SK-N-SH (cell line): ENCODE measurements at regions of chrX and their contacts with region 1.

Region 1: GRCh38 chrX:152904151-152905080 is 6.5 kb downstream of the ZNF185 start:
- DNase-seq: peak; percentile 86
- H3K4me3 ChIP-seq: no peak overlapping the region; a peak in 1 of 4 replicates
- H3K27ac ChIP-seq: no peak overlapping the region
- H3K4me1 ChIP-seq: peaks cover 6 to 32% of the 10 kb centered on the region in 2 experiments; a peak in 2 of 4 replicates
- H3K27me3 ChIP-seq: no peaks in the 10 kb centered on the region; the same call in 1 of the 2 replicates
- CTCF ChIP-seq: peak; percentile 85
- EP300 ChIP-seq: no peak
- RAD21 ChIP-seq: peak; percentile 60

Region 2: DNA sequence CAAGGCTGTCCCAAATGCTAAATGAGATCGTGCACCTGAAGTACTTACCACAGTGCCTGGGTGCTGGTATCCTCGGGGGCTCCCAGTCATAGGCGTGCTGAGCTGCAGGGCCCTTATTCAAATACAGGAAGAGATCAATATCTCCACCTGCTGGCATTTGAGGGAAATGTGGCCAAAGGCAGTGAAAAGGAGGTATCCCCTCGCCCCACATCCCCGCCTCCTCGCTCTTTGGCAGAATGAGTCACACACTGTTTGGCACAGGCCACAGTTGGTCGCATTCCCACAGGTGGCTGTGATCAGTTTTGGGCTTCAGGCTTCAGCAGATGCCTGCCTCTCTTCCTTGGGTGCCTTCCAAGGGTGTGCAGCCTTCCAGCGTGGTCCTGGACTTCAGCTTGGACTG is 21.9 kb after region 1 on chrX:
- CTCF ChIA-PET with region 1: interaction called, 24 read pairs
- POLR2A ChIA-PET with region 1: no interaction called
- DNase-seq: peak; percentile 70
- H3K4me3 ChIP-seq: no peak overlapping the region
- H3K27ac ChIP-seq: no peak overlapping the region
- H3K4me1 ChIP-seq: peaks cover 0 to 3% of the 10 kb centered on the region in 2 experiments; a peak in 1 of 4 replicates
- H3K27me3 ChIP-seq: peaks cover 4% of the 10 kb centered on the region; the same call in 1 of the 2 replicates
- CTCF ChIP-seq: peak; percentile 68
- EP300 ChIP-seq: no peak
- RAD21 ChIP-seq: peak; percentile 63